Aorta (tissue), 5 donors: ENCODE measurements at regions of chr1 and their contacts with region 1.

Region 1: GRCh38 chr1:201530741-201531531 is 8.0 kb upstream of the NAV1 start:
- DNase-seq: peak; percentile 92 to 96
- ATAC-seq: peak; percentile 94
- H3K4me3 ChIP-seq: no peak overlapping the region
- H3K27ac ChIP-seq: peak overlapping the region in 1 of 2 donors; percentile 27
- H3K4me1 ChIP-seq: peaks cover 1 to 3% of the 10 kb centered on the region in 2 donors
- H3K27me3 ChIP-seq: no peaks in the 10 kb centered on the region

Region 2: GRCh38 chr1:201703621-201704439 is 172.9 kb after region 1 on chr1:
- intact Hi-C with region 1: loop called (anchors 2 kb)
- DNase-seq: peak; percentile 88 to 95
- ATAC-seq: peak; percentile 93
- H3K4me3 ChIP-seq: no peak overlapping the region
- H3K27ac ChIP-seq: no peak overlapping the region
- H3K4me1 ChIP-seq: no peaks in the 10 kb centered on the region
- H3K27me3 ChIP-seq: no peaks in the 10 kb centered on the region

Region 3: DNA sequence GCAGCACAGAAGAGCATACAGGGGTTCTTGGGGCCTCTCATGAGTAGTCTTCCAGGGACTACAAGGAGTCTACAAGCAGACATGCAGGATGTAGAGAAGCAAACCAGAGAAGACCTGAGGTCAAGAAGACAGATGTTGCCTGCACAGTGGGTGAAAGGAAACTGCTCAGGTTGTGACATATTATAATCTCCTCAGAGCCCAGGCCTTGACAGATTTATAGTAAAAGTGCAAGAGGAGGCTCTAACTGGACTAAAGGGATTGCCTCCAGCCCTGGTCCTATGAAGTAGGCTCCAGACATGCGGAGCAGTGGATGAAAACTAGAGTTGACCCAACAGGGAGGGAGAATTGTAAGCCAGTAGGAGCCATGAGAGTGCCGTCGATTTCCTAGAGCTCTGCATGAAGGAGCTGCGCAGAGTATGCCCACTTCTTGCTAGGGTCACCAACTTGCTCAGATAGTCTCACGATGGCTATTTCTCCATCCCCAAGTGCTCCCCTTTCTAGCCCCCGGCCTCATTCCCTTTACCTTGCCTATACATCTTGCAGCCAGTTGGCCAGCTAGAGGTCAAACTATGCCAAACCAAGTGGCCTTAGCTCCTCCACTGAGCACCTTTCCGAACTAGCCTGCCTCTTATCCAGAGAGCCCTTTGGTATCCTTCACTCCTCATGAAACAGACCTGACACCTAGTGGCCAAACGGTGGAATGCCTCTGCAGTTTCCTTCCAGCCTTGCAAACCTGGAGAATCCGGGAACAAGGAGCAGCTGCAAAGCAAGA is 261.8 kb after region 1 on chr1:
- intact Hi-C with region 1: loop called in 1 of 2 experiments (anchors 5 kb)
- DNase-seq: peak; percentile 78 to 81
- ATAC-seq: peak; percentile 92
- H3K4me3 ChIP-seq: no peak overlapping the region
- H3K27ac ChIP-seq: peak overlapping the region in 1 of 2 donors; percentile 73
- H3K4me1 ChIP-seq: peaks cover 4 to 6% of the 10 kb centered on the region in 2 donors
- H3K27me3 ChIP-seq: no peaks in the 10 kb centered on the region

Region 4: GRCh38 chr1:201888282-201889089 is 357.6 kb after region 1 on chr1 and contains the start of gene SHISA4:
- intact Hi-C with region 1: loop called in 1 of 2 experiments (anchors 10 kb)
- DNase-seq: peak; percentile 90 to 95
- ATAC-seq: peak; percentile 88
- H3K4me3 ChIP-seq: peak within 1 kb of the TSS; percentile 49 to 73
- H3K27ac ChIP-seq: peak within 1 kb of the TSS; percentile 14 to 85
- H3K4me1 ChIP-seq: peaks cover 0 to 4% of the 10 kb centered on the region in 2 donors
- H3K27me3 ChIP-seq: no peaks in the 10 kb centered on the region
- total RNA-seq, gene SHISA4: 30.6 to 39.9 TPM

Region 5: GRCh38 chr1:201955009-201955728 is 424.2 kb after region 1 on chr1 and contains the start of gene TIMM17A:
- intact Hi-C with region 1: loop called in 1 of 2 experiments (anchors 10 kb)
- DNase-seq: peak; percentile 98 to 99
- ATAC-seq: peak; percentile 99
- H3K4me3 ChIP-seq: peak within 1 kb of the TSS; percentile 7 to 92
- H3K27ac ChIP-seq: peak within 1 kb of the TSS; percentile 26 to 32
- H3K4me1 ChIP-seq: no peaks in the 10 kb centered on the region
- H3K27me3 ChIP-seq: no peaks in the 10 kb centered on the region
- total RNA-seq, gene TIMM17A: 29.2 to 48.8 TPM